Aorta (tissue), 5 donors: ENCODE measurements at regions of chr2 and their contacts with region 1.

Region 1: DNA sequence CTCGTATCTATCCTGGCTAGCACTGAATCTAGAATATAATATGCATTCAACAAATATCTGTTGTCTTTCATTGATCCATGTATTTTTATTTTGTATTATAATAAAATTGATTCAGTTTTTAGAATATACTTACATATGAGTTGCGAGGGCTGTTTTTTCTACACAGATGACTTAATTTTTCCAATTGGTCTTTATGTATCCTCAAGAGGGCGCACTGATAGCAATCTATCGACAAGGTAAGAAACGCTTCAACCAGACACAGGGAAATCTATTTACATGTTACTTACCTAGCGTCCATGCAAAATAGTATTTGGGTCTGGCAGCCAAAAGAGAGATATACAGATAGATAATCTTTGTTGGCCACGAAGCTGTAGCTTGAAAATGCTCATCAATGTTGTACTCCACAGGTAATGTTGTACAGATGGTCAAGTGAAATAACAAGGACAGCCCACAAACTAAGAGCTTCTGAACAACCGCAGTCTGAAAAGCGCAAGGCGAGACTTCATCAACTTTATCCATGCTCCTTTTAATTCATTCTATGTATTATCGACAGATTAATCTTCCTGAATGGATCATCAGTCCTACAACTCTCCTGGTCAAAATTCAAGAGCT is 35.5 kb upstream of the KIDINS220 start:
- DNase-seq: no peak
- ATAC-seq: no peak
- H3K4me3 ChIP-seq: no peak overlapping the region
- H3K27ac ChIP-seq: no peak overlapping the region
- H3K4me1 ChIP-seq: no peaks in the 10 kb centered on the region
- H3K27me3 ChIP-seq: no peaks in the 10 kb centered on the region

Region 2: GRCh38 chr2:8796878-8797550 is 75.9 kb before region 1 on chr2:
- intact Hi-C with region 1: no loop called
- DNase-seq: no peak
- ATAC-seq: no peak
- H3K4me3 ChIP-seq: no peak overlapping the region
- H3K27ac ChIP-seq: no peak overlapping the region
- H3K4me1 ChIP-seq: no peaks in the 10 kb centered on the region
- H3K27me3 ChIP-seq: no peaks in the 10 kb centered on the region

Region 3: GRCh38 chr2:8922431-8922830 is 49.5 kb after region 1 on chr2:
- intact Hi-C with region 1: no loop called
- DNase-seq: no peak
- ATAC-seq: no peak
- H3K4me3 ChIP-seq: no peak overlapping the region
- H3K27ac ChIP-seq: no peak overlapping the region
- H3K4me1 ChIP-seq: no peaks in the 10 kb centered on the region
- H3K27me3 ChIP-seq: no peaks in the 10 kb centered on the region

Region 4: DNA sequence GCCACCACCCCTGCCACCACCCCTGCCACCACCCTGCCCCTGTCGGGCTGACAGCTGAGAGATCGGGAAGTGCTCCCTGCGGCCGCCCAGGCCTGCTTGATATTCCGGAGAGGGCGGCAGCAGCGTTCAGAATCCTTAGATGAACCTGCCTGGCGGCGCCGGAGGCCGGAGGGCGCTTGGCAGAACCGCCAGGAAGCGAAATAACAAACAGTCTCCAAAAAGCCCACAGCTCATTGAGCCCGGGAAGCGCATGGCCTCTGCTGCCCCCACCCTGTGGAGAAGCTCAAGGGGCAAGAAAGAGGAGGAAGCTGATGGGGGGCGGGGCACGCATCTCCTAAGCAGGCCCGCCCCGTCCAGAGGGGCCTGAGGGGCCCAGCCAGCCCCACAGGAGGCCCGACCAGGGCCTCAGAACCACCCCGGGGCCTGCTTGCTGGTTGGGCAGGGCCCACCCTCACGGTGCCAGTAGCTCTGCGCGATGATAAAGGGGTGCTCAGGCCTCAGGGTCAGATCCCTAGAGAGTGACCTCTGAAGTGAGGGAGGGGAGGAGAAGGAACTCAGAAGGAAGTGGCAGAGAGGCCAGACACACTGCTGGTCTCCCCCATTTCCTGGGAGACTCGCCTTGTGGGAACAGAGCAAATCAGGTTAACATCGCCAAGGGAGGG is 222.9 kb after region 1 on chr2:
- intact Hi-C with region 1: loop called in 1 of 2 experiments (anchors 10 kb)
- DNase-seq: peak; percentile 71 to 80
- ATAC-seq: peak; percentile 68
- H3K4me3 ChIP-seq: no peak overlapping the region
- H3K27ac ChIP-seq: no peak overlapping the region
- H3K4me1 ChIP-seq: no peaks in the 10 kb centered on the region
- H3K27me3 ChIP-seq: no peaks in the 10 kb centered on the region